OCI-LY7 (cell line): ENCODE measurements at regions of chr14 and their contacts with region 1.

Region 1: DNA sequence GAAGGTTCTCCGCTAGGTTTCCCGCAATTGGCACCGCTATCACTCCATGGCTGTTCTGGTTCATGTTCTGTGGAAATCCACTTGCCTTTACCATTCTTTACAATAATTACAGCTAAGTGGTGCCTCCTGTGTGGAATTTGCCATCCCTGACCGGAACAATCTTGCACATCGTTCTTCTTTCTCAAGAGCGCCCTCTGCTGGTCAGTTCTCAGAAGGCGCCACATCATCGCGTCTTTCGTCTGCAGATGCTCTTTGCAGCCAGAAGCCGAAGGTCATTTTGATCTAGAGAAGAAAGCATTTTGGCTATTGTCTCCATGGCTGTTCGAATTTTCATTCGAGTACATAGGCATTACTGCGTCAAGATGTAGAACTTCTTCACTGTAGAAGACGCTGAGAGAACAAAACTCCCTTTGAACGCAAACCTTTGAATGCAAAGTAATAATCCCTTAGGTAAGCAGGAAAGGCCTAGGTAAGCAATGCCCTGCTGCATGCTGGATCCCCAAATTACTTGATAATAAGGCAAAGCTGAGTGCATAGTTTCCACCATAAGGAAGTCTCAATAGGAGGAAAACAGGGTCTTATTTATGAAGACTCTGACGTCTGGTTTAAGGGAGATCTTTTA is 10.1 kb upstream of the RTRAF start:
- DNase-seq: peak; percentile 73
- H3K4me3 ChIP-seq: no peak overlapping the region
- H3K27ac ChIP-seq: no peak overlapping the region
- H3K4me1 ChIP-seq: no peaks in the 10 kb centered on the region
- CTCF ChIP-seq: peak; percentile 98

Region 2: DNA sequence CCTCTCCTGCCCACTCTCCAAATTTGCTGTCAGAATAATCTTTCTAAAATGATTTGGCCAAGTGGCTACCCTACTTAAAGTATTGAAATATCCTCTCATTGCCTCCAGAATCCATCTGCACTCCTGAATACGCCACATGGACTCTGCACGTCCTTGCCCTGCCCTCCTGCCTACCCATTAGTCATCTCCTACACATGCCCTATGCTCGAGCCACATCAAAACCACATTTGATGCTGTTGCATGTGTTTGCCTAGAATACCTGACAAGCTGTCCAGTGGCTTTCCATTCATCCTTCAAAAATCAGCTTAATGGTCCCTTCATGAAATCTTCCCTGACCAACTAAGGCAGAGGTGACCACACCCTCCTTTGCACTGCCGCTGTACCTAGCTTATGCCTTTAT is 1879.9 kb before region 1 on chr14:
- CTCF ChIA-PET with region 1: no interaction called
- POLR2A ChIA-PET with region 1: no interaction called
- intact Hi-C with region 1: no loop called
- DNase-seq: no peak
- H3K4me3 ChIP-seq: no peak overlapping the region
- H3K27ac ChIP-seq: no peak overlapping the region
- H3K4me1 ChIP-seq: peaks cover 7% of the 10 kb centered on the region
- CTCF ChIP-seq: no peak

Region 3: GRCh38 chr14:51780006-51780692 is 199.1 kb before region 1 on chr14:
- CTCF ChIA-PET with region 1: no interaction called
- POLR2A ChIA-PET with region 1: interaction called, 3 read pairs
- intact Hi-C with region 1: loop called (anchors 1 kb)
- DNase-seq: peak; percentile 77
- H3K4me3 ChIP-seq: no peak overlapping the region
- H3K27ac ChIP-seq: no peak overlapping the region
- H3K4me1 ChIP-seq: no peaks in the 10 kb centered on the region
- CTCF ChIP-seq: peak; percentile 96

Region 4: GRCh38 chr14:51821822-51822221 is 157.4 kb before region 1 on chr14:
- CTCF ChIA-PET with region 1: no interaction called
- POLR2A ChIA-PET with region 1: no interaction called
- intact Hi-C with region 1: loop called (anchors 5 kb)
- DNase-seq: no peak
- H3K4me3 ChIP-seq: no peak overlapping the region
- H3K27ac ChIP-seq: no peak overlapping the region
- H3K4me1 ChIP-seq: peaks cover 7% of the 10 kb centered on the region
- CTCF ChIP-seq: no peak

Region 5: GRCh38 chr14:52153939-52154338 is 174.7 kb after region 1 on chr14:
- CTCF ChIA-PET with region 1: no interaction called
- POLR2A ChIA-PET with region 1: no interaction called
- intact Hi-C with region 1: no loop called
- DNase-seq: no peak
- H3K4me3 ChIP-seq: no peak overlapping the region
- H3K27ac ChIP-seq: no peak overlapping the region
- H3K4me1 ChIP-seq: no peaks in the 10 kb centered on the region
- CTCF ChIP-seq: no peak